Naive thymus-derived CD4-positive, alpha-beta T cell (primary cell): ENCODE measurements at regions of chr7 and their contacts with region 1.

Region 1: DNA sequence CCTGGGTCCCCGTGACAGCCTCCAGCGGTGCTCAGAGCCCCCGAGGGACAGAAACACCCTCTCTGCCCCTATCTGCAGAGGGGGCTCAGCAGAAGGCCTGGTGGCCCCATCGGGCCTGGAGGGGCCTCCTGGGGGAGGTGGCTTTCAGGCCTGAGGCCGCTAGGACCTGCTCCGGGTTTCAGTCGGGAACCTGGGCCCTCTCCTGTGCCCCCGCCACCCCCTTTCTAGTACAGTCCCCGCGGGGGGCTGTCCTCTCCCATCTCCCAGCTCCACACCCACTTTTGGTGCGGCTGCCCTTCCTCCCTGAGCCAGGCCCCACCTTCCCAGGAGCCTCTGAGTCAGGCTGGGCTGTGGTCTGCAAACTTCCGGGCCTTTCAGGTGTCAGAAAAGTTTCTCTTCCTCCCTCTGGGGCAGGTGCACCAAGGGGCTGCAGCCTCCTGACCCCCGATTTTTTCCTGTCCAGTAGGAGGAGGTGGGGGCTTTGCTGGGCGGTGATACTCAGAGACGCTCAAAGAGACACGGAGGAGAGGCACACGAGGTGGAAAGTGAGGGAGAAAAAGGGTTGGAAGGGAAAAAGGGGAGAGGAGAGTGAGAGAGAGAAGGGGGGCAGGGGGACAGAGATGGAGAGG is 692 bp downstream of the CARD11 start:
- DNase-seq: peak; percentile 21 to 72 (median 52)
- ATAC-seq: peak; percentile 76
- H3K4me3 ChIP-seq: peak overlapping the region; percentile 85
- H3K4me3 Mint-ChIP-seq: peak overlapping the region; percentile 91 to 98 (median 96)
- H3K27ac ChIP-seq: peak overlapping the region; percentile 100
- H3K27ac Mint-ChIP-seq: peak overlapping the region; percentile 82 to 97 (median 93)
- H3K4me1 ChIP-seq: peaks cover 38 to 54% of the 10 kb centered on the region in 2 donors
- H3K4me1 Mint-ChIP-seq: peaks cover 39 to 73% (median 56%) of the 10 kb centered on the region in 7 donors
- H3K27me3 ChIP-seq: no peaks in the 10 kb centered on the region
- H3K27me3 Mint-ChIP-seq: no peaks in the 10 kb centered on the region

Region 2: DNA sequence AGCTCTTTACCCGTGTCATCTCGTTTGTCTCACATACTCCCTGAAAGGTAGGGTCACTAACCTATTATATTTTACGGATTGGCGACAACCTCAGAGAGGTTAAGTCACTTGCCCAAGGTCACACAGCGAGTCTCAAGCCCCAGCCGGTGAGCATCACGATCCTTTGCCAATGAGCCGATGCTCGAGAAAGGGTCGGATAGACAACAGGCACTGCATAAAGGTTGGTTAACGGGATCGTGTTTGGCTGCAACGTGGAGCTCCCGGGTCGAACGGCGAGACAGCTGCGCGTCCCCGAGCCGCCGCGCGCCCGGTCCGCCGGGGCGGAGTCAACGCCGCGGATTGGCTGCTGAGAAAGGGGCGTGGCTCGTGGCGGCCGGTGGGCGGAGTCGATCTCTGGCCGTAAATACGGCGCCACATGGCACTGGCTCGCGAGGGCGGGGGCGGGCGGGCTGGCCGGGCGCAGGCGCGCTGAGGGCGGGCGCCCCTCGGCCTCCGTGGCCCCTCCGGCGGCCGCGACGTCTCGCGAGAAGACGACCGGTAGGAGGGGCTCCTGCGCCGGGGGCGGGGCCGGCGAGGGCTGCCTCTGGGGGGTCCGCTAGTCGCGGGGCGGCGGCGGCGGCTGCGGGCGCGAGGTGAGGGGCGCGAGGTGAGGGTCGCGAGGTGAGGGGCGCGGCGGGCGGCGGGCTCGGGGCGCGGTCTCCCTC is 639.8 kb before region 1 on chr7 and contains the start of gene CHST12:
- CTCF ChIA-PET with region 1: no interaction called
- POLR2A ChIA-PET with region 1: no interaction called
- intact Hi-C with region 1: loop called in 1 of 2 experiments (anchors 5 kb)
- DNase-seq: peak; percentile 91 to 96 (median 93)
- ATAC-seq: peak; percentile 94
- H3K4me3 ChIP-seq: peak within 1 kb of the TSS; percentile 81
- H3K4me3 Mint-ChIP-seq: peak within 1 kb of the TSS; percentile 80 to 94 (median 89)
- H3K27ac ChIP-seq: peak within 1 kb of the TSS; percentile 70
- H3K27ac Mint-ChIP-seq: peak within 1 kb of the TSS; percentile 60 to 96 (median 84)
- H3K4me1 ChIP-seq: peaks cover 23 to 28% of the 10 kb centered on the region in 2 donors
- H3K4me1 Mint-ChIP-seq: peaks cover 38 to 54% (median 49%) of the 10 kb centered on the region in 7 donors
- H3K27me3 ChIP-seq: no peaks in the 10 kb centered on the region
- H3K27me3 Mint-ChIP-seq: peaks cover 0 to 2% (median 0%) of the 10 kb centered on the region in 5 donors
- total RNA-seq, gene CHST12: 13.3 to 41.6 (median 24.3) TPM

Region 3: DNA sequence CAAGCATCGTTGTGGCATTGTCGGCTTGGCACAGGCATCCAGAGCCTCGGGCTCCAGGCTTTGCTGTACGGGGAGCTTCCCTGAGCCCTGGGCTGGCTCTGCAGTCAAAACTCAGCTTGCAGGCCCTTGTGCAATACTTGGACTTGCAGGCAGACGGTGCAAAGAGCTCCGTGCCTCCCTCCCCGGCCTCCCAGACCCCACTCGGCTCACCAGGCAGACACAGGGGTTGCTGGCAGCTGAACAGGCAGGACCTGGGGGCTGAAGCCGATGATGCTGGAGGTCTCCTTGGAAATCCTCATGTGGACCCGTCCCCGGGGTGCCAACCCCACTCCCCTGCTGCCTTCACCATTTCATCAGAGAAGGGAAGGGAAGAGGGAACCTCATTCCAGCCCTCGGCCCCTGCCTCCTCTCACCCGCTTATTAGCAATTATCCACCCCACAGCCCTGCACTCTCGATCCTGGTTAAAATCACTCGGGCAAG is 139.3 kb before region 1 on chr7:
- CTCF ChIA-PET with region 1: no interaction called
- POLR2A ChIA-PET with region 1: no interaction called
- intact Hi-C with region 1: loop called in 1 of 2 experiments (anchors 2 kb)
- DNase-seq: no peak
- ATAC-seq: peak; percentile 10
- H3K4me3 ChIP-seq: no peak overlapping the region
- H3K4me3 Mint-ChIP-seq: no peak overlapping the region
- H3K27ac ChIP-seq: no peak overlapping the region
- H3K27ac Mint-ChIP-seq: peak overlapping the region in 4 of 9 donors; percentile 47 to 78 (median 65)
- H3K4me1 ChIP-seq: peaks cover 0 to 19% of the 10 kb centered on the region in 2 donors
- H3K4me1 Mint-ChIP-seq: peaks cover 0 to 40% (median 2%) of the 10 kb centered on the region in 7 donors
- H3K27me3 ChIP-seq: no peaks in the 10 kb centered on the region
- H3K27me3 Mint-ChIP-seq: no peaks in the 10 kb centered on the region

Region 4: GRCh38 chr7:2978403-2978802 is 64.6 kb before region 1 on chr7:
- CTCF ChIA-PET with region 1: no interaction called
- POLR2A ChIA-PET with region 1: interaction called, 7 read pairs
- intact Hi-C with region 1: loop called (anchors 2 kb)
- DNase-seq: peak in 8 of 9 donors; percentile 29 to 80 (median 45)
- ATAC-seq: peak; percentile 78
- H3K4me3 ChIP-seq: peak overlapping the region; percentile 45
- H3K4me3 Mint-ChIP-seq: peak overlapping the region; percentile 82 to 93 (median 87)
- H3K27ac ChIP-seq: peak overlapping the region; percentile 65
- H3K27ac Mint-ChIP-seq: peak overlapping the region; percentile 80 to 96 (median 91)
- H3K4me1 ChIP-seq: peaks cover 24 to 47% of the 10 kb centered on the region in 2 donors
- H3K4me1 Mint-ChIP-seq: peaks cover 57 to 80% (median 68%) of the 10 kb centered on the region in 7 donors
- H3K27me3 ChIP-seq: no peaks in the 10 kb centered on the region
- H3K27me3 Mint-ChIP-seq: no peaks in the 10 kb centered on the region

Region 5: GRCh38 chr7:3065724-3066143 is 22.8 kb after region 1 on chr7:
- CTCF ChIA-PET with region 1: interaction called, 5 read pairs
- POLR2A ChIA-PET with region 1: interaction called, 7 read pairs
- intact Hi-C with region 1: loop called (anchors 1 kb)
- DNase-seq: peak; percentile 32 to 61 (median 50)
- ATAC-seq: peak; percentile 58
- H3K4me3 ChIP-seq: peak overlapping the region; percentile 28
- H3K4me3 Mint-ChIP-seq: peak overlapping the region; percentile 56 to 85 (median 72)
- H3K27ac ChIP-seq: peak overlapping the region; percentile 54
- H3K27ac Mint-ChIP-seq: peak overlapping the region; percentile 68 to 98 (median 91)
- H3K4me1 ChIP-seq: peaks cover 63 to 78% of the 10 kb centered on the region in 2 donors
- H3K4me1 Mint-ChIP-seq: peaks cover 65 to 83% (median 80%) of the 10 kb centered on the region in 7 donors
- H3K27me3 ChIP-seq: no peaks in the 10 kb centered on the region
- H3K27me3 Mint-ChIP-seq: no peaks in the 10 kb centered on the region

Region 6: GRCh38 chr7:3117488-3118231 is 74.7 kb after region 1 on chr7:
- CTCF ChIA-PET with region 1: no interaction called
- POLR2A ChIA-PET with region 1: no interaction called
- intact Hi-C with region 1: loop called in 1 of 2 experiments (anchors 1 kb)
- DNase-seq: peak in 6 of 9 donors; percentile 15 to 49 (median 30)
- ATAC-seq: peak; percentile 64
- H3K4me3 ChIP-seq: peak overlapping the region; percentile 28
- H3K4me3 Mint-ChIP-seq: peak overlapping the region in 9 of 10 donors; percentile 75 to 91 (median 84)
- H3K27ac ChIP-seq: peak overlapping the region; percentile 43
- H3K27ac Mint-ChIP-seq: peak overlapping the region in 7 of 9 donors; percentile 72 to 96 (median 92)
- H3K4me1 ChIP-seq: peaks cover 20 to 47% of the 10 kb centered on the region in 2 donors
- H3K4me1 Mint-ChIP-seq: peaks cover 36 to 63% (median 59%) of the 10 kb centered on the region in 7 donors
- H3K27me3 ChIP-seq: no peaks in the 10 kb centered on the region
- H3K27me3 Mint-ChIP-seq: no peaks in the 10 kb centered on the region

Region 7: GRCh38 chr7:3461923-3462322 is 418.9 kb after region 1 on chr7:
- CTCF ChIA-PET with region 1: no interaction called
- POLR2A ChIA-PET with region 1: no interaction called
- intact Hi-C with region 1: loop called in 1 of 2 experiments (anchors 1 kb)
- DNase-seq: peak; percentile 11 to 91 (median 86)
- ATAC-seq: peak; percentile 96
- H3K4me3 ChIP-seq: peak overlapping the region; percentile 19
- H3K4me3 Mint-ChIP-seq: peak overlapping the region; percentile 21 to 92 (median 81)
- H3K27ac ChIP-seq: peak overlapping the region; percentile 70
- H3K27ac Mint-ChIP-seq: peak overlapping the region; percentile 76 to 96 (median 93)
- H3K4me1 ChIP-seq: peaks cover 15 to 45% of the 10 kb centered on the region in 2 donors
- H3K4me1 Mint-ChIP-seq: peaks cover 20 to 90% (median 77%) of the 10 kb centered on the region in 7 donors
- H3K27me3 ChIP-seq: no peaks in the 10 kb centered on the region
- H3K27me3 Mint-ChIP-seq: no peaks in the 10 kb centered on the region

Region 8: DNA sequence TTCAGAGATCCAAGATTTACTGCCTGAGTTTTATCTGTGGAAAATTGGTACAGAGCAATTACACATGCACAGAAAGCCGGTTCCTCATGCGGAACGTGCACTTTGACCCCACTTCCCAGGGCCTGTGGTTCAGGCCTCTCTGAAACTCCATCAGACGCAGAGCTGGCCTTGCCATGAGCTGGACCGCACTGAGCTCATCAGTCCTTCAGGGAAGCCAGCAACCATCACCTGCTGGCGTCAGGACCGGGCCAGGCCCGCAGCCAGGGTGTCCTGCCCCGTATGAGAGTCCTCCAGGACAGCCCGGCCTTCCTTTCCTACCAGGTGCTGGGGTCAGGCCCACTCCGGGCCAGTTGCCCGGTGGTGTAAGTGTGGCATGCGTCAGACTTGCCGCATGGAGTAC is 1192.6 kb after region 1 on chr7:
- CTCF ChIA-PET with region 1: no interaction called
- POLR2A ChIA-PET with region 1: no interaction called
- intact Hi-C with region 1: no loop called
- DNase-seq: no peak
- ATAC-seq: no peak
- H3K4me3 ChIP-seq: no peak overlapping the region
- H3K4me3 Mint-ChIP-seq: no peak overlapping the region
- H3K27ac ChIP-seq: no peak overlapping the region
- H3K27ac Mint-ChIP-seq: no peak overlapping the region
- H3K4me1 ChIP-seq: no peaks in the 10 kb centered on the region
- H3K4me1 Mint-ChIP-seq: peaks cover 0 to 8% (median 4%) of the 10 kb centered on the region in 7 donors
- H3K27me3 ChIP-seq: no peaks in the 10 kb centered on the region
- H3K27me3 Mint-ChIP-seq: no peaks in the 10 kb centered on the region